GM10248 (cell line): ENCODE measurements at regions of chr19 and their contacts with region 1.

Region 1: GRCh38 chr19:4400135-4400936 is at the start of gene SH3GL1:
- DNase-seq: peak; percentile 91
- CTCF ChIP-seq: peak; percentile 100

Region 2: GRCh38 chr19:4322942-4323665 is 77.2 kb before region 1 on chr19:
- CTCF ChIA-PET with region 1: interaction called, 16 read pairs
- POLR2A ChIA-PET with region 1: no interaction called
- DNase-seq: no peak
- CTCF ChIP-seq: no peak

Region 3: GRCh38 chr19:4342615-4343369 is 57.5 kb before region 1 on chr19:
- CTCF ChIA-PET with region 1: interaction called, 23 read pairs
- POLR2A ChIA-PET with region 1: interaction called, 4 read pairs
- DNase-seq: peak; percentile 93
- CTCF ChIP-seq: peak; percentile 6

Region 4: GRCh38 chr19:4369888-4370260 is 30.5 kb before region 1 on chr19:
- CTCF ChIA-PET with region 1: interaction called, 34 read pairs
- POLR2A ChIA-PET with region 1: no interaction called
- DNase-seq: peak; percentile 71
- CTCF ChIP-seq: peak; percentile 79

Region 5: DNA sequence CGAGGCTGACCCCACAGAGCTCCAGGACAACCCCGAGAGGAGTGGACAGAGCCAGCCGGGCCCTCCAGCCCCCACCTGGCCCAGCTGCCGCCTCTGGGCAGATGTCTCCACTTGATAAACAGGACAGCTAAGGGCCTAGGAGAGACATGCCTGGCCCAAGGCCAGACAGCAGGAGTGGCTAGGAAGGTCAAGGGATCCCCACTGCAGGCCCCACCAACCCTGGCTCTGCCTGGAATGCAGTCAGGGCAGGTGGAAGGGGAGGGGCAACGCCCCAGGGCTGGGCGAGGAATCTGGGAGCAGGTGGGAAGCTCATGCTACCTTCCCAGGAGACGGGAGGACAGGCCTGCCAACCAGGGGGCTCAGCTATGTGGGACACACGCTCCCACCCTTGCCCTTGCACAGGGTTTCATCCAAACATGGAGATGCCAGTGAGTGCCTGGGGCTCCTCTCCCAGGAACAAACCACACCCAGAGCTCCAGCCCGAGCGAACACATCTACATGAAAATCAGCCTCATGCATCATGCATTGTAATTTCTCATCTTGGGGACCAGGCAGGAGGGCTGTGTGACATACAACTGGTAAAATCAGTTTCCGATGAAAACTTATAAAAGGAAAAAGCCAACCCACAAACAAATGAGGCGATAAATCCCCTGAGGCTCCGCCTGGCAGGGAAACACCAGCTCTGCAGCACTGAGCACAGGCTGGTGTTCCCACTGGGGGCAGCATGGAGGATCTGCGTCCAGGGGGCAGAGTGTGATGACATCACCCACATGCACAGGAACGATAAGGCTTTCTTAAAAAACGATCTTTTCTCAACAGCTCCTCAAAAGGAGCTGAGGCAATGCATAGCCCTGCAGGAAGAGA is 24.9 kb before region 1 on chr19:
- CTCF ChIA-PET with region 1: interaction called, 45 read pairs
- POLR2A ChIA-PET with region 1: no interaction called
- DNase-seq: peak; percentile 59
- CTCF ChIP-seq: peak; percentile 35

Region 6: GRCh38 chr19:4415352-4415751 is 15.0 kb after region 1 on chr19:
- CTCF ChIA-PET with region 1: interaction called, 12 read pairs
- POLR2A ChIA-PET with region 1: no interaction called
- DNase-seq: no peak
- CTCF ChIP-seq: no peak

Region 7: GRCh38 chr19:4471403-4472173 is 71.3 kb after region 1 on chr19:
- CTCF ChIA-PET with region 1: interaction called, 10 read pairs
- POLR2A ChIA-PET with region 1: interaction called, 3 read pairs
- DNase-seq: peak; percentile 98
- CTCF ChIP-seq: no peak